Naive thymus-derived CD4-positive, alpha-beta T cell (primary cell): ENCODE measurements at regions of chr22 and their contacts with region 1.

Region 1: DNA sequence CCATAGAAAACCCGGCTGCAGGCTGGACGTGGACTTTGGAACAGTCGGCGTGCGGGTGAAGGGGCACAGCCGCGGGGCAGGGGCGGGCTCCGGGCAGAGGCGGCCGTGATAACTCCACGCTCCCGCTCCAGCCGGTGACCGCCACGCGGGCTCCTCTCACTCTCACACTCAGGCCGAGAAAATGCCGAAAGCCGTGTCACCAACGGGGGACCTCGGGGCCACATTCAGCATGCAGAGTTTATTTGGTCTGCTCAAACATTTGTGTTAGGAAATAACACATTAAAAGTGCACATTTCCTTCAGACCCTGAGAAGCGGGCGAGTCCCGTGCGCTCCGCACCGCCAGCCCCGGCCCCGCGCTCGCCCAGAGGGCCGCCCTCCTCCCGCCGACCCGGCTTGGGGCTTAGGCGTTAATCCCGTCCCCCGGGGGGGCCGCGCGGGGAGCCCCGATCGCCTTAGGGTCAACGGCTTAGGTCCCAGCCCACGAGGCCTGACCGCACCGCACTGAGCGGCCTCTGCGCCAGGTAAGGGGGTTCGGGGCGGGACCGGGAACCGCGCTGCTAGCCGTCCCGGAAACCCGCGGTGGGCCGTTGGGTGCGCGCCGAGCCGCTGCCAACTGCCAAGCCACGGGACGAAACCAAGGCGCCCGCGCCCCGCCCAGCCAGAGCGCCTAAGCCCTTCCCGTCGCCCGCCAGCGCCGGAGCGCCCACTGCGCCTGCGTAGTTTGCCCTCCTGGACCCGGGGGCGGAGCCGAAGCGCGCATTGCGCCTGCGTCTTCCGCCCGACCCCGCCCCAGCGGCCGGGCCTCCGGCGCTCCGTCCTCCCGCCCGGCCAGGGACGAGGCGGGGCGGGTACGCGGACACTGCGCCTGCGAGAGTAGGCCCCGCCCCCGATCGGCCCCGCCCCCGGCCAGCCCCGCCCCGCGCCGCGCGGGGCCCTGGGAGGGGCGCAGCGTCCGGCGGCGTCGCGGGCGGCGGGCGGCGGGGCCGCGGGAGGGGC is at the start of gene ZBED4:
- DNase-seq: peak; percentile 90 to 100 (median 98)
- ATAC-seq: peak; percentile 95
- H3K4me3 ChIP-seq: peak within 1 kb of the TSS; percentile 68
- H3K4me3 Mint-ChIP-seq: peak within 1 kb of the TSS; percentile 90 to 99 (median 96)
- H3K27ac ChIP-seq: peak within 1 kb of the TSS; percentile 90
- H3K27ac Mint-ChIP-seq: peak within 1 kb of the TSS; percentile 86 to 97 (median 93)
- H3K4me1 ChIP-seq: peaks cover 14 to 31% of the 10 kb centered on the region in 2 donors
- H3K4me1 Mint-ChIP-seq: peaks cover 30 to 62% (median 45%) of the 10 kb centered on the region in 7 donors
- H3K27me3 ChIP-seq: no peaks in the 10 kb centered on the region
- H3K27me3 Mint-ChIP-seq: peaks cover 0 to 17% (median 0%) of the 10 kb centered on the region in 5 donors
- total RNA-seq, gene ZBED4: 13.6 to 20.1 (median 17.1) TPM

Region 2: DNA sequence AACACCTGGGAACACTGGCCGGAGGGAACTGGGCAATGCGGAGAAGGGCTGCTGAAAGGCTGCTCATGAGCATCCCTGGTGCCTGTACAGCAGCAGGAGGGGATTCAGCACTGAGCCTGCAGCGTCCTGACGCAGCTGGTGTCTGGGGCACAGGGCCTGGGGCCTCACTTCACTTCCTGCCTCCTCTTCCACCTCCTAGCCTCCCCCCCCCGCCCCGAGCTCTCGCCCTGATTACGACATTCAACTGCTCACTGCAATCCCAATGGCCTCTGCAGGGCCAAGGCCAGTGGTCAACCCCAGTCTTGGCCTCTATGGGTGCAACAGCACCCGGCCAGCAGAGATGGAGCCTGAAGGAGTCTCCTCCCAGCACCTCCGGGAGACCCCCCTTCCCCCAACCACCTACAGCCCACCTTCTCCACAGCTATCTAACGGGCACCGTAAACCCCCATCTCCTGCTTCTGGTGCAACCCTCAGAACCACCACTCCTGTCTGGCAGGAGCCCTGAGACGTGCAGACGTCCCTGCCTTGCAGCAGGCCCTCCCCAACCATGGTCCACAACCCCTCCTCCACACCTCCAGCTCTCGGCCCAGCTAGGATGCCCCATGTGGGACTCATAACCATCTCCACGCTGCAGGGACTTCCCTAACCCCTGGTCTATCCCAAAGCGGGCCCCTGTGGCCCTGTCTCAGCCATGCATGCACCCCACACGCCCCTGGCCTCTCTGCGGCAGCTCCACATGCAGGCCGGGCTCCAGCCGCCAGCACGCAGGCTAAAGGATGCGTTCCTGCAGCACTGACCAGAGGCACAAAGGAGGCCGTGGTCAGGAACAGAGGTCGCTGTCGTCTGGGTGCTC is 63.7 kb before region 1 on chr22:
- CTCF ChIA-PET with region 1: interaction called, 4 read pairs
- POLR2A ChIA-PET with region 1: interaction called, 6 read pairs
- intact Hi-C with region 1: loop called in 1 of 2 experiments (anchors 5 kb)
- DNase-seq: peak in 7 of 9 donors; percentile 38 to 64 (median 54)
- ATAC-seq: peak; percentile 68
- H3K4me3 ChIP-seq: peak overlapping the region; percentile 12
- H3K4me3 Mint-ChIP-seq: peak overlapping the region; percentile 61 to 85 (median 78)
- H3K27ac ChIP-seq: peak overlapping the region; percentile 72
- H3K27ac Mint-ChIP-seq: peak overlapping the region; percentile 80 to 95 (median 92)
- H3K4me1 ChIP-seq: peaks cover 12 to 22% of the 10 kb centered on the region in 2 donors
- H3K4me1 Mint-ChIP-seq: peaks cover 32 to 69% (median 62%) of the 10 kb centered on the region in 7 donors
- H3K27me3 ChIP-seq: no peaks in the 10 kb centered on the region
- H3K27me3 Mint-ChIP-seq: no peaks in the 10 kb centered on the region

Region 3: DNA sequence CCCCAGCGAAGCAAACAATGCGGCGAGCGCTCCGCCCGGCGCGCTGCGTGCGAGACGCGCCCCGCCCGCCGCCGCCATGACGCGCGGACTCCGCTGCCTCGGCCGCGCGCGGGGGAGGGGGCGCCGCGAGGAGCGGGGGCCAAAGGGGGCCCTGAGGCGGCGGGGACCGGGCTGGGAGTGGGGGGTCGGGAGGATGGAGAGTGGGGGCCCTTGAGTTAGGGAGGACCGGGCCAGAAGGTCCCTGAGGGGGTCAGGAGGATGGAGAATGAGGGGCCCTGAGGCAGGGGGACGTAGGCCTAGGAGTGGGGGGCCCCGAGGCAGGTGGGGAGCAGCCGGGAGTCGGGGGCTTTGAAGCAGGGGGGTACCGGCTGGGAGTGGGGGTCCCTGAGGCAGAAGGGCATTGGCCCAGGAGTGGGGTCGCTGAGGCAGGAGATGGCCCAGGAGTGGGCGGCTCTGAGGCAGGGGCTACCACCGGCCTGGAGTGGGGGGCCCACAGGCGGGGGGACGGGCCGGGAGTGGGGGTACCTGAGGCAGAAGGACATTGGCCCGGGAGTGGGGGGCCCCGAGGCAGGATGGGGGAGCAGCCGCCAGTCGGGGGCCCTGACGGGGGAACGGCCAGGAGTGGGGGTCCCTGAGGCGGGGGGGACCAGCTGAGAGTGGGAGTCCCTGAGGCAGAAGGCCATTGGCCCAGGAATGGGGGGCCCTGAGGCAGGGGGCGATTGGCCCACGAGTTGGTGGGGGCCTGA is 25.2 kb before region 1 on chr22 and contains the start of gene BRD1:
- CTCF ChIA-PET with region 1: no interaction called
- POLR2A ChIA-PET with region 1: interaction called, 21 read pairs
- intact Hi-C with region 1: loop called (anchors 1 kb)
- DNase-seq: peak in 8 of 9 donors; percentile 35 to 71 (median 52)
- ATAC-seq: peak; percentile 76
- H3K4me3 ChIP-seq: peak within 1 kb of the TSS; percentile 75
- H3K4me3 Mint-ChIP-seq: peak within 1 kb of the TSS; percentile 90 to 93 (median 92)
- H3K27ac ChIP-seq: peak within 1 kb of the TSS; percentile 95
- H3K27ac Mint-ChIP-seq: peak within 1 kb of the TSS; percentile 87 to 96 (median 94)
- H3K4me1 ChIP-seq: peaks cover 28 to 36% of the 10 kb centered on the region in 2 donors
- H3K4me1 Mint-ChIP-seq: peaks cover 33 to 63% (median 50%) of the 10 kb centered on the region in 7 donors
- H3K27me3 ChIP-seq: no peaks in the 10 kb centered on the region
- H3K27me3 Mint-ChIP-seq: peaks cover 0 to 12% (median 0%) of the 10 kb centered on the region in 5 donors
- total RNA-seq, gene BRD1: 50.0 to 130 (median 87.7) TPM

Region 4: GRCh38 chr22:49838771-49839717 is 14.2 kb before region 1 on chr22:
- CTCF ChIA-PET with region 1: interaction called, 3 read pairs
- POLR2A ChIA-PET with region 1: interaction called, 16 read pairs
- intact Hi-C with region 1: loop called (anchors 1 kb)
- DNase-seq: peak; percentile 63 to 96 (median 93)
- ATAC-seq: peak; percentile 99
- H3K4me3 ChIP-seq: peak overlapping the region; percentile 66
- H3K4me3 Mint-ChIP-seq: peak overlapping the region; percentile 61 to 86 (median 82)
- H3K27ac ChIP-seq: peak overlapping the region; percentile 100
- H3K27ac Mint-ChIP-seq: peak overlapping the region; percentile 88 to 98 (median 95)
- H3K4me1 ChIP-seq: peaks cover 14 to 18% of the 10 kb centered on the region in 2 donors
- H3K4me1 Mint-ChIP-seq: peaks cover 21 to 32% (median 28%) of the 10 kb centered on the region in 7 donors
- H3K27me3 ChIP-seq: no peaks in the 10 kb centered on the region
- H3K27me3 Mint-ChIP-seq: peaks cover 0 to 12% (median 0%) of the 10 kb centered on the region in 5 donors

Region 5: GRCh38 chr22:49917974-49918910 is 65.0 kb after region 1 on chr22 and contains the starts of genes ALG12 and CRELD2:
- CTCF ChIA-PET with region 1: no interaction called
- POLR2A ChIA-PET with region 1: interaction called, 8 read pairs
- intact Hi-C with region 1: loop called (anchors 1 kb)
- DNase-seq: peak; percentile 92 to 98 (median 95)
- ATAC-seq: peak; percentile 99
- H3K4me3 ChIP-seq: peak within 1 kb of the TSS; percentile 96
- H3K4me3 Mint-ChIP-seq: peak within 1 kb of the TSS; percentile 84 to 97 (median 88)
- H3K27ac ChIP-seq: peak within 1 kb of the TSS; percentile 97
- H3K27ac Mint-ChIP-seq: peak within 1 kb of the TSS; percentile 73 to 95 (median 91)
- H3K4me1 ChIP-seq: peaks cover 11 to 20% of the 10 kb centered on the region in 2 donors
- H3K4me1 Mint-ChIP-seq: peaks cover 0 to 36% (median 26%) of the 10 kb centered on the region in 7 donors
- H3K27me3 ChIP-seq: no peaks in the 10 kb centered on the region
- H3K27me3 Mint-ChIP-seq: no peaks in the 10 kb centered on the region
- total RNA-seq, gene ALG12: 16.2 to 22.4 (median 19.5) TPM
- total RNA-seq, gene CRELD2: 19.7 to 80.9 (median 28.5) TPM

Region 6: DNA sequence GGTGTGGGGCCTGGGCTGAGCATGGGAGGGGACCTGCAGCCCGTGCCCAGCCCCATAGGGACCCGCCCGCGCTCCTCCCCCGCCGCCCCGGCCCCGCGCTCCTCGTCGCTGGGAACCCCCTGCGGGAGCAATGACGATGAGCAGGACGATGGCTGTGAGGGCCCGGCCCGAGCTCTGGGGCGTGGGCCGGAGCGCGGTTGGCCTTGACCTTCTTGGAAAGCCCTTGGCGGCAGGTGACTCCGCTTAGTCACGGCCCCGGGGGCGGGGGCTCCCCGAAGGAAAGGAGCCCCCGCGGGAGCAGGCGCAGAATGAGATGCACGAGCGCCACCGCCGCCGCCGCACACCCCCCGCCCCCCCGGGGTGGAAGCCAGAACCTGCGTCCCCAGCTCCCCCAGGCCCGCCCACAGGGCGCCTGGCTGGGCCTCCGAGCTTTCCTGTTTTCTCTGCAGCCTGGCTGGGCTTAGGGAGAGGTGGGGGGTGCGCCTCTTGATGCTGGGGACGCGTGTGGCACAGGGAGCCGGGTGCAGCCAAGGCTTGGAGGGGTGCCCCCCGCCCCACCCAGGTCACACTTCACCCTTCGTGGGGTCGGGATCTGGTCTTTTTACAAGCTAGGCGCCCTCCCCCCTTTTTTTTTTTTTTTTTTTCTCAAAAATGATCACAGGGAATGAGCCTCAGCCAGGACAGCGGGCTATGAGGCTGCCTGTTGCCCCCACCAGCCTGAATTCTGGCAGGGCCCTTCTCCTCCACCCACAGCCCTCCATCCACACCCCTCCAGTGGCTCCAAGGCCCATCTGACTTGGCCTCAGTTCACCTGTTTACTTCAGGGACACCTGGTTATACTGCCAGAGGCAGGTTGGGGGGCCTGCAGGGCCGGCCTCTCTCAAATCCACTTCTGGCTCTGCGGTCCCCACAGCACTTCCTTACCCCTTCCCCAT is 83.1 kb after region 1 on chr22:
- CTCF ChIA-PET with region 1: no interaction called
- POLR2A ChIA-PET with region 1: no interaction called
- intact Hi-C with region 1: loop called in 1 of 2 experiments (anchors 1 kb)
- DNase-seq: peak; percentile 85 to 98 (median 91)
- ATAC-seq: peak; percentile 84
- H3K4me3 ChIP-seq: peak overlapping the region; percentile 41
- H3K4me3 Mint-ChIP-seq: peak overlapping the region; percentile 56 to 76 (median 73)
- H3K27ac ChIP-seq: peak overlapping the region; percentile 99
- H3K27ac Mint-ChIP-seq: peak overlapping the region; percentile 78 to 94 (median 91)
- H3K4me1 ChIP-seq: peaks cover 12 to 18% of the 10 kb centered on the region in 2 donors
- H3K4me1 Mint-ChIP-seq: peaks cover 6 to 31% (median 23%) of the 10 kb centered on the region in 7 donors
- H3K27me3 ChIP-seq: no peaks in the 10 kb centered on the region
- H3K27me3 Mint-ChIP-seq: no peaks in the 10 kb centered on the region